ENCODE measurements at regions of chr15 and their contacts with region 1.

Region 1: DNA sequence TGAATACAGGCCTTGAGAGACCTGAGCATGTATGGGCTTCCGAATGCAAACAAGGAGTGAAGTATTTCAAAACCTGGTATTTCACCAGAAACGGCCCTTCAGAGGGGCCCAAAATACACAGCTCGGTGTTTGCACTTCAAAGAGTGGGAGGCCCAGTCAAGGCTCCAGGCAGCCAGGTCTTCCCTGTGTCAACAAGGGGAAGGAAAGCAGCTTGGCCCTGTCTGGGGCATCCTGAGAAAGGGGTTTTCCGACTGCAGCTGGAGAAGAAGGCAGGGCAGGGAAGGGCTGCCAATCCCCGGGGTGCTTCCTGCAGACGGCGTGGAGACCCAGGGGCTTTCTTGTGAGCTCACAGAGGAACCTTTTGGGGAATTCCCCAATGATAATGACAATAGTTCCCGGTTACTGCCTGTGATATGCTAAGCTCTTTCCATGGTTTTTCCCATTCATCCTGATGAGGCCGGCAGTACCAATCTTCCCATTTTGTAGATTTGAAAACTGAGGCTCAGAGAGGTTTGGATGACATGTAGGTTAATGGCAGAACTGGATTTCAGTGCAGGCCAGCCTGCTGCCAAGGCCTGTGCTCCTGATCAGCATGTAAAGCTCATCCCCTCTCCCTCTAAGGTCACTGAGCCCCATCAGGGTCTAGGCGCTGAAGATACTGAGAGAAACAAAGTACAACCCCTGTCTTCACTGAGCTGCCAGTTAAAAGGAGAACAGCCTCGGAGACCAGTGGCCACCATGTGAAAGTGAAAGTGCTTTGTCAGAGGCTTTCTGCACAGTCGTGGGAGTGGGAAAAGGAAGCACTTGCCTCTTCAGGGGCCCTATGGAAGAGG is 43.0 kb upstream of the TLE3 start:
- DNase-seq: peak; percentile 55
- ATAC-seq: peak; percentile 32
- H3K4me3 Mint-ChIP-seq: peak overlapping the region; percentile 8
- H3K27ac Mint-ChIP-seq: peak overlapping the region; percentile 40
- H3K4me1 Mint-ChIP-seq: peaks cover 34% of the 10 kb centered on the region
- H3K27me3 Mint-ChIP-seq: peaks cover 21% of the 10 kb centered on the region

Region 2: DNA sequence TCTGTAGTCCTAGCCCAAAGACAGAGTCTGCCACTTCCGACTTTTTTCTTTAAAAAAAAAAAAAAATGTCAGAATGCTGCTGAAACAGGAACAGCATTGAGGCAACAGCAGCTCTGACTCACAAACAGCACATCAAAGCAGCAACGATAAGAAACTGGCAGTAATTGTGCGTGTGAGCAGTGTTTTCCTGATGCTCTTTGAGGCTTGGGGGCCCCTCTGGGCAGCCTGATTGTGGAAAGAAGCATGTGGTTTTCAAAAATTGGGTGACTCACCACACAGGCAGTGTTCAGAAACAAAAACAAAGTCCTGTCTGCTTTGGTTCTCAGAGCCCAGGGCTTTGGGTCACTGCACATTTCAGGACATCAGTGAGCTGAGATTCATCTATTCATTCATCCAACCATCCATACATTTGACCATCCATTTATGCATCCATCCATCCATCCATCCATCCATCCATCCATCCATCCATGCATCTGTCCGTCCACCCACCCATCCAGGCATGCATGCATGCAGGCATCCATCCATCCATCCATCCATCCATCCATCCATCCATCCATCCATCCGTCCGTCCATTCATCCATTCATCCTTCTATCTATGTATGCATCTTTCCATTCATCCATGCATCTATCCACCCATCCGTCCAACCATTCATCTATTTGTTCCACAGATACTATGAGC is 379.7 kb before region 1 on chr15:
- CTCF ChIA-PET with region 1: no interaction called
- POLR2A ChIA-PET with region 1: no interaction called
- intact Hi-C with region 1: loop called (anchors 2 kb)
- DNase-seq: peak; percentile 89
- ATAC-seq: peak; percentile 42
- H3K4me3 Mint-ChIP-seq: peak overlapping the region; percentile 25
- H3K27ac Mint-ChIP-seq: peak overlapping the region; percentile 94
- H3K4me1 Mint-ChIP-seq: peaks cover 72% of the 10 kb centered on the region
- H3K27me3 Mint-ChIP-seq: no peaks in the 10 kb centered on the region

Region 3: DNA sequence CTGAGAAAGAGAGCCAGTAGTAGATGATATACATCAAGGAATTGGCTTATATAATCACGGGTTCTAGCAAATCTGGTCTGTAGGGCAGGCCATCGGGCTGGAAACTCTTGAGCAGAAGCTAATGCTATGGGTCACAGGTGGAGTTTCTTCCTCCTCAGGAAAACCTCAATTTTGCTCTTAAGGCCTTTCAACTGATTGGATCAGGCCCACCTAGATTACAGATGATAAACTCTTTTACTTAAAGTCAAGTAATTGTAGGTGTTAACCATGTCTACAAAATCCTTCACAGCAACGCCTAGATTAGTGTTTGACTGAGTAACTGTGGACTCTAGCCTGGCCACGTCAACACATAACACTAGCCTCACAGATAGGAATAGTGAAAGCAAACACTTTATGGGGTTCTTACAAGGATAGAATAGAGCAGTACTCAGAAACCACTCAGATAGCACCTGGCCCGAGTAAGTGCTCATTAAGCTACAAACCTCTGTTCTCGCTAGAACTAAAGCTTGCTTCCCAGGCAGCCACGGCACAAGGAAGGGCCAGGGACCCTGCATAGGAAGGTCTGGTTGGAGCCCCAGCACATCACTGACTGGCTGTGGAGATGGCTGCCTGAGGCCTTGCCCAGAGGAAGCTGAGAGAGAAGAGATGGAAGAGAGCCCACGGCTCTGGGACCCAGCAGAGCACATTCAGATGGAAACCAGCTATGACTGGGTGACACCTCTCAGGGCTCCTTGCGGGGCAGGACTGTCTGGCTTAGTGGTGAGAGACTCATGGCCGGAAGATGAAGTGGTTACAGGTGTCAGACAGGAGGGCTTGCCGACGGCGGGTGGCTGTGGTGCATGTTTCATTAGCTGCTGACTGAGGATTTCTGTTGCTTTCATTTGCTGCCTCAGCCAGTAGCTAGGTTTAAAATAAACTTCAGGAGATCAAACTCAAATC is 159.4 kb after region 1 on chr15:
- CTCF ChIA-PET with region 1: no interaction called
- POLR2A ChIA-PET with region 1: no interaction called
- intact Hi-C with region 1: loop called in 1 of 2 experiments (anchors 5 kb)
- DNase-seq: peak; percentile 89
- ATAC-seq: peak; percentile 100
- H3K4me3 Mint-ChIP-seq: no peak overlapping the region
- H3K27ac Mint-ChIP-seq: no peak overlapping the region
- H3K4me1 Mint-ChIP-seq: peaks cover 11% of the 10 kb centered on the region
- H3K27me3 Mint-ChIP-seq: no peaks in the 10 kb centered on the region

Region 4: GRCh38 chr15:70480196-70480856 is 339.6 kb after region 1 on chr15:
- CTCF ChIA-PET with region 1: interaction called, 3 read pairs
- POLR2A ChIA-PET with region 1: no interaction called
- intact Hi-C with region 1: loop called in 1 of 2 experiments (anchors 1 kb)
- DNase-seq: peak; percentile 88
- ATAC-seq: peak; percentile 86
- H3K4me3 Mint-ChIP-seq: no peak overlapping the region
- H3K27ac Mint-ChIP-seq: no peak overlapping the region
- H3K4me1 Mint-ChIP-seq: peaks cover 29% of the 10 kb centered on the region
- H3K27me3 Mint-ChIP-seq: peaks cover 47% of the 10 kb centered on the region

Measured in activated CD4-positive, alpha-beta T cell treated with anti-CD3 and anti-CD28 coated beads for 36 hours (primary cell).